ENCODE measurements at regions of chr11 and their contacts with region 1.

Region 1: DNA sequence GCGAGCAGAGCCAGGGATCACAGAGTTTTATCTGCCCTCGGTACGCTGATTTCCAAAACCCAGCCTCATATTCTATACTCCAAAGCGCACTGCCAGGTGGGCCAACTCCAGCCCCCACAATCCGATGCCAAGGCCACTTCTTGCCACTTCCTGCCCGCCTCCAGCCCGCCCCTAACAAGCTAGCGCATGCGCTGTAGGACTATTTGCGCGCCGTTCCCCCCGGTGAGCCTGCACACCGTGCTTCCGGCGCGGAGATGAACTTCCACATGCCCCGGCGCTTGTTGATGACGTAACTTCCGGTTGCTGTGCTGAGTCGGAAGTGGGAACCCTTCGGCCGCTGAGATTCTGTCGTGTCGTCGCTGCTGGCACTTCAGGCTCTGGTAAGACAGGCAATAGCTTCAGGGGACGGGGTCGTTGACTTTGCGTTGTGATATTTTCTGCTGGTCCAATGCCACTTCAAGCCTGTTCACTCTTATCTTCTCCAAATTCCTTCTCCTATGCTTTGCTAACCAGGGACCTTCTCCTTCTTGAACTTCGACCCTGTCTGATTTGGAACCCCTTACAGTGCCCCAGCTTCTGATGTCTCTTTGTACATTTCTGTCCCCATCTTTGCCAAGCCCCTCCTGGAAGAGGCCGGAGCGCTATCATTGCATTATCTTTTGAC is at the start of gene UBE4A:
- DNase-seq: peak; percentile 88
- CTCF ChIP-seq: no peak

Region 2: GRCh38 chr11:118180300-118180703 is 179.1 kb before region 1 on chr11:
- in situ Hi-C with region 1: loop called (anchors 10 kb)
- DNase-seq: no peak
- CTCF ChIP-seq: no peak

Region 3: DNA sequence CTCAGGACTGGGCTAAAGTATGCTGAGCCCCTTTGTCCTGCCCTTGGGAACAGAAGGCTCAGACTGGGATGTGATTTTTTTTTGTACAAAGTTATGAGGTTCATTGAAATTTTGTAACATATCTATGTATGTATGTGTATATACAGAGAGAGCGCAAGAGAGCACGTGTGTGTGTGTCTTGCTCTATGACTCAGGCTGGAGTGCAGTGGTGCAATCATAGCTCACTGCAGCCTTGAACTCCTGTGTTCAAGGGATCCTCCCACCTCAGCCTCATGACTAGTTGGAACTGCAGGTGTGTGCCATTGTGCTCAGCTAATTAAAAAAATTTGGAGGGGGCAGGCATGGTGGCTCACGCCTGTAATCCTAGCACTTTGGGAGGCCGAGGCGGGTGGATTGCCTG is 177.3 kb after region 1 on chr11:
- in situ Hi-C with region 1: no loop called
- DNase-seq: no peak
- CTCF ChIP-seq: no peak